Transverse colon (tissue), 4 donors: ENCODE measurements at regions of chr12 and their contacts with region 1.

Region 1: DNA sequence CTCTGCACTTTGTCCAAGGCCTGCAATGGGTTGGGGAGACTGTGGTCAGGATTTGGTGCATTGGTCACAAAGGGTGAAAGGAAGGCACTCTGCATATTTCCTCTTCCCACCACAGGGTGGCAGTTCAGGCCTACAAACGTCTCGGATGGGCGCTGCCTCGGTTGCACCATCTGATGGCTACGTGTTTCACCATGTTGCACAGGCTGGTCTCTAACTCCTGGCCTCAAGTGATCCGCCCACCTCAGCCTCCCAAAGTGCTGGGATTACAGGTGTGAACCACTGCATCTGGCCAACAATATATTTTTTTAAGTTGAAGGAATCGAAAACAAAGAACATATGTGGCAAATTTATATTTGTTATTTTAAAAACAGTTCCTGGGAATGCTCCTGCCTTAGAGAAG is 35.1 kb downstream of the TMBIM6 start:
- DNase-seq: peak; percentile 59
- H3K4me3 ChIP-seq: no peak overlapping the region
- H3K27ac ChIP-seq: no peak overlapping the region
- H3K4me1 ChIP-seq: peaks cover 0 to 5% (median 0%) of the 10 kb centered on the region in 4 donors
- H3K27me3 ChIP-seq: no peaks in the 10 kb centered on the region
- CTCF ChIP-seq: peak; percentile 63 to 74 (median 69)
- EP300 ChIP-seq: no peak
- POLR2A ChIP-seq: no peak

Region 2: DNA sequence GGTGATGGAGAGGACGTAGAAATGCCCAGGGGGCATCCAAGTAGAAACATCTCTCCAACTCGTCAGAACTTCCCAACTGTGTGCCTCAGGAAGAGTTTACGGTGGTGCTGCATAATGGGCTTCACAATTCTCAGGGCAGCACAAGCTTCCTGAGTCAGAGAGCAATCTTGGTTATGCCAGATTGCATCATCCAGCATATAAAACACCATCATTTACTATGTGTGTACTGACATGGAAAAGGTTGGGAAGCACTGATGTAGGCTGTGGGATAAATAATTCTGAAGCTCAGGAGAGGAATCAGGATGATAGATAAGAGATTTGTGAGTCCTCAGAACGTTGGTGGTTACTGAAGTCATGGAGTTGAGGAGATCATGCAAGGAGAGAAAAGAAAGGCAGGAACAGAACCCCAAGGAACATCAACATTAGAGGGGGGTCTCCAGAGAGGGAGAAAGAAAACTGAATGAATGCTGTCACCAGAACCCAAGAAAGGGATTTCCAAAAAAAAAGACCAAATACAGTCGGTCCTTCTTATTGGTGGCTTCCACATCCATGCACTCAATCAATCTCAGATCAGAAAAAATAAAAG is 56.5 kb after region 1 on chr12:
- in situ Hi-C with region 1: loop called in 2 of 4 experiments (anchors 5 to 10 kb)
- intact Hi-C with region 1: no loop called
- DNase-seq: no peak
- H3K4me3 ChIP-seq: no peak overlapping the region
- H3K27ac ChIP-seq: no peak overlapping the region
- H3K4me1 ChIP-seq: peaks cover 0 to 9% (median 8%) of the 10 kb centered on the region in 4 donors
- H3K27me3 ChIP-seq: no peaks in the 10 kb centered on the region
- CTCF ChIP-seq: no peak
- EP300 ChIP-seq: no peak
- POLR2A ChIP-seq: no peak

Region 3: GRCh38 chr12:51172515-51173431 is 1396.4 kb after region 1 on chr12 and contains the start of gene TFCP2:
- in situ Hi-C with region 1: no loop called
- intact Hi-C with region 1: no loop called
- DNase-seq: peak; percentile 97
- H3K4me3 ChIP-seq: peak within 1 kb of the TSS; percentile 65 to 86 (median 74)
- H3K27ac ChIP-seq: peak within 1 kb of the TSS; percentile 94 to 99 (median 96)
- H3K4me1 ChIP-seq: peaks cover 0 to 26% (median 17%) of the 10 kb centered on the region in 4 donors
- H3K27me3 ChIP-seq: no peaks in the 10 kb centered on the region
- CTCF ChIP-seq: no peak
- EP300 ChIP-seq: no peak
- POLR2A ChIP-seq: peak; percentile 78
- total RNA-seq, gene TFCP2: 13.5 to 20.5 (median 15.4) TPM